ENCODE measurements at regions of chr6 and their contacts with region 1.

Region 1: DNA sequence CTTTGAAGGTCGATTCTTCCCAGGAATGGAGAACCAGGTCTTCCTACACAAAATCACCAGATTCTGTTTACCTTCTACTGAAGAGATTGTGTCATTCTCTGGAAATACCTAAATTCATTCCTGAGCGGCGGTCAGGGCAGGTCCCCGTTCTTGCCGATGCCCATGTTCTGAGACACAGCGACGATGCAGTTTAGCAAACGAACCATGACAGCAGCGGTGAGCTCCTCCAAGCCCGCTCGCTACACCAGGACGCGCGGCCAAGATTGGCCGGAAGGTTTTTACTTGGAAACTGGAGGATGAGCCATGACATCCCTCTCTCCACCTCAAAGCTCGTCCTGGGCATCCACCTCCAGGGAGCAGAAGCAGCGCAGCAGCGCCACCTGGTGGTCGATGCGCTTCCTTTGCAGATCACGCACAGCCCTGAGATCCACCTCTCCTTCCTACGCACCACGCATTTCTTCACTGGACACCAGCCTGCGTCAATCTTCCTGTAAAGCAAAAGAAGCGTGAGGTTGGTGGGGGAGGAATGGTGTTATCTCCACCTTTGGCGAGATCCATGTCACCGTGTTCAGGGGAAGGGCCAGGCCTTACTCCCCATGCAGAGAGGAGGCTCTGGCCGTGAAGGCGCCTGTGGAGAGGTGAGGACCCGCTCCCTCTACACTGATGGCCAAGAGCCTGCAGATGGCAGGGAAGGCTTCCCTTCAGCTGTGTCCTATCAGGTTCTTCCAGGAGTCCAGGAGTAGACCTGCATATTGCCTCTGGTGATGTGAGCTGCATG is 9.9 kb upstream of the HLA-B start:
- DNase-seq: peak; percentile 82
- CTCF ChIP-seq: peak; percentile 92

Region 2: GRCh38 chr6:30844091-30844535 is 522.8 kb before region 1 on chr6:
- CTCF ChIA-PET with region 1: no interaction called
- POLR2A ChIA-PET with region 1: no interaction called
- DNase-seq: no peak
- CTCF ChIP-seq: no peak

Region 3: GRCh38 chr6:31143148-31143547 is 223.7 kb before region 1 on chr6:
- CTCF ChIA-PET with region 1: interaction called, 16 read pairs
- POLR2A ChIA-PET with region 1: no interaction called
- DNase-seq: no peak
- CTCF ChIP-seq: no peak

Region 4: DNA sequence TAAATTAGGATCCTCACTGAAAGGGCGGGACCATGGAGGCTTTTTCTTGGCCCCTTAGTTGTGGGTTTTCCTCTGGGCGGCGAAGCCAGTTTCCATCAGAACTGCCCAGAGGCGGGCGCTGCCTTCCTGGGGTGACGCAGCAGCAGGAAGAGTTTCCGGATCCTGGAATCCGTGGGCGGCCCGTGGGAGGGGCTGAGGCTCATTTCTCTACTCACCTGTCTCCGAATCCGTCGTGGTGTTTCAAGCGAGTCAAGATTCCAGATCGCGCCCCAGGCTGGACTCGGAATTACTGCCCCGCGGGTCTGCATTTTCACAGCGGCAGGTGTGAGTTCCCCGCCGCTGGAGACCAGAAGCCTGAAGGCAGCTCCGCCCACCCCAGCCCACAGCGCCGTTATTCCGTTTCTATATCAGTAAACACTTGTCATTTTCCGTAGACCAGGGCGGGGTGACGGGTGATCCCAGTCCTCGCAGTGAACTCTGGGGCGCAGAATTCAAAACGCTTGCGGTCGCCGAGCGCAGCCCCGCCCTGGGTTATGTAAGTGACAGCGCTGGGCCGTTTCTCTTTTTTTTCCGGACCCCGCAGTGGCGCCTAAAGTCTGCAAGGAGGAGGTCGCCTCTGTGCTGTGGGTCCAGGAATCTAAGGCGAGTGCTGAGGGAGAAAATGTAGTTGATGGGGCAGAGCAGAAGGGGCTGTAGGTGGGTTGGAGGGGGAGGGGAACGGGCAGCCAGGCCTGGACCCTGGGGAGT is 169.2 kb before region 1 on chr6:
- CTCF ChIA-PET with region 1: interaction called, 82 read pairs
- POLR2A ChIA-PET with region 1: interaction called, 6 read pairs
- DNase-seq: peak; percentile 76
- CTCF ChIP-seq: no peak

Region 5: DNA sequence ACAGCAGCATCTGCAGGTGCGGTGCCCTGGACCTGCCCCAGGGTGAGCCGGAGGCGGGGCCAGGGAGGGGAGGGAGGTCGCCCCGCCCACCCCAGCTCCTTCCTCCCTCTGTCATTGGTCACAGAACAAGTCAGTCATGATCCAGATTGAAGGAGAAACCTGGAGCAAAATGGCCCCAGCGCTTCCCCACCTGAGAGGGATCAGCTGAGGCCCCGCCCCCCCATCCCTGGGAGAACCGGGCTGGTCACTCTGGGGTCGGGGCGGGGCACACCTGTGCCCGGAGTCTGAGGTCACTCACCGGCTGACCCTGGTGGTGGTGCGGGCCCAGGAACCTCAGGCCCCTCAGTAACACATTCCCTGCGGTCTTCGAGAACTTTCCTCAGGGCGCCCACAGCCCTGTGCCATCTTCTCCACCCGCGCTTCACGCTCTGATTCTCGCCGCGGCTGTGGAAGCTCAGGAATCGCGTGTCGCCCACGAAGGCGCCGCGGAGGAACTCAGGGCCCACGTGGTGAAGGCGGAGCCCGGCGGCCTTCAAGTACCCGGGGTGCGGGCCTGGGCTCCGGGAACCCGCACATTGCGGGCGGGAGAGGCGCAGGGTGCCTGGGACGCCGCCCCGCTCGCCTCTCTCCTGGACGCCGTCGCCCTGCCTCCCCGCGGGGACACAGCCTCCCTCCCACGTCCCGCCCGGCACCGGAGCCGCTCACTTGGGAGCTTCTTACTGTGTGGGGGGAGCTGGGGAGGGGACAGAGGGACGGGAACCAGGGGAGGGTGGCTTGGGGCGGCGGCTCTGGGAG is 58.6 kb before region 1 on chr6:
- CTCF ChIA-PET with region 1: interaction called, 13 read pairs
- POLR2A ChIA-PET with region 1: no interaction called
- DNase-seq: peak; percentile 70
- CTCF ChIP-seq: no peak

Region 6: DNA sequence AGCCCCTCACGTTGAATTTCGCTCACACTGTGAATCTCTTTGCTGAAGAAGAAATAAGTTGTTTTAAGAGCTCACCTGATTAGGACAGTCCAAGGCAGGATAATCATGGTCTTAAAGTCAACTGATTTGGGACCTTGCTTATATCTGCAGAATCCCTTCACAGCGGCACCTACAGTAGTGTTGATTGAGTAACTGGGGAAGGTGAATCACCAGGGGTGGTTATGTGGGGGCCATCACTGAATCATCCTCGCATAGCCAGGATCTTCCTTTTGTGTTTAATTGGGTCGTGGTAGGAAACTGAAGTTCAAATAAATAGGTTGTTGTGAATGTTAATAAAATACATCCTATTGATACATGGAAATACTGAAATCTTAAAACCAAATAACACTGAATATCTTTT is 16.3 kb after region 1 on chr6:
- CTCF ChIA-PET with region 1: interaction called, 28 read pairs
- POLR2A ChIA-PET with region 1: no interaction called
- DNase-seq: no peak
- CTCF ChIP-seq: no peak

Region 7: GRCh38 chr6:31615748-31616147 is 248.9 kb after region 1 on chr6:
- CTCF ChIA-PET with region 1: no interaction called
- POLR2A ChIA-PET with region 1: no interaction called
- DNase-seq: no peak
- CTCF ChIP-seq: no peak